PC-9 (cell line): ENCODE measurements at regions of chr3 and their contacts with region 1.

Region 1: DNA sequence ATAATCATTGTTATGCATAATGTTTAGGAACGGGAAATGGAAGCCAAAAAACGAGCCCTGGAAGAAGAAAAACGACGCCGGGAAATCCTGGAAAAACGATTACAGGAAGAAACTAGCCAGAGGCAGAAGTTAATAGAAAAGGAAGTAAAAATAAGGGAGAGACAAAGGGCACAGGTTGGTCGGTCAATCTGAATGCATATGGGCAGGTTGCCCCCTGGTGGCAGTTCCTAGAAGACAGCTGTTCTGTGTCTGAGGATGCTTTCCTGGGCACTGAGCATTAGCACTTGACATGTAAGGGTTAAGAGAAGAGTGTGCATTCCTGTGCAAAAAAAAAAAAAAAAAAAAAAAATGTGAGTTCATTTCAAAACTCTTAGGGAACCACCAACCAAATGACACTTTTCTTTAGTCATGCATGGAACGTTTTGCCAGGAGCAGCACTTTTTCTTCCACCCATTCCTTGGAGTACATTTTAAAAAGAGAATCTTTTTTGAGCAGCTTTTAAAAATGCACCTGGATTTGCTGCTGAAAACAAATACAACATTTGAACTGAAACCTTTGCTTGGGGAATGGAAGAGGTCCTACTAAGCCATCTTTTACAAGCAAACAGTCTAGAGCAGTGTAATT is 11.1 kb upstream of the ABHD10 start:
- DNase-seq: peak; percentile 71 to 85
- H3K4me3 ChIP-seq: no peak overlapping the region
- H3K27ac ChIP-seq: peak overlapping the region; percentile 54
- H3K4me1 ChIP-seq: peaks cover 25% of the 10 kb centered on the region
- H3K27me3 ChIP-seq: no peaks in the 10 kb centered on the region
- CTCF ChIP-seq: peak; percentile 99

Region 2: GRCh38 chr3:111577794-111578685 is 389.7 kb before region 1 on chr3:
- CTCF ChIA-PET with region 1: interaction called, 3 read pairs
- POLR2A ChIA-PET with region 1: interaction called, 4 read pairs
- intact Hi-C with region 1: loop called (anchors 1 kb)
- DNase-seq: peak; percentile 40 to 79
- H3K4me3 ChIP-seq: no peak overlapping the region
- H3K27ac ChIP-seq: no peak overlapping the region
- H3K4me1 ChIP-seq: peaks cover 12% of the 10 kb centered on the region
- H3K27me3 ChIP-seq: no peaks in the 10 kb centered on the region
- CTCF ChIP-seq: peak; percentile 80

Region 3: DNA sequence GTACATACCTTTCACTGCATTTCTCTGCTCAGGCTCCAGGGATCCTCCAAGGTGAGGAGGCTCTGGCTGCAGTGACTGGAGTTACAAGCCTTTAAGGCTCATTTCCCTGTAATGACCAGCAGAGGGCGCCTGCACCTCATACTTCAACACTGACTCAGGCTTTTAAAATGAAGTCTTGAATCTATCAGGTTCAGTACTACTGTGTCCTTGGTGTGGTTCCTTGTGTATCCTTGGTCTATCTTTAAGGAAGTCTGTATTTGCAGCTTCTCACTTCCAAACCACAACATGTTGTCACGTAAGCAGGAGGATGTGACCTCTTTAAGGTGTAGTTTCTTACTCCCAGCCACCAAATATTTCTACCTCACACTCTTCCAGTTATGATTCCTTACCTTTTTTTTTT is 250.2 kb before region 1 on chr3:
- CTCF ChIA-PET with region 1: interaction called, 37 read pairs
- POLR2A ChIA-PET with region 1: no interaction called
- intact Hi-C with region 1: loop called (anchors 1 kb)
- DNase-seq: peak; percentile 84 to 98
- H3K4me3 ChIP-seq: no peak overlapping the region
- H3K27ac ChIP-seq: peak overlapping the region; percentile 34
- H3K4me1 ChIP-seq: peaks cover 25% of the 10 kb centered on the region
- H3K27me3 ChIP-seq: no peaks in the 10 kb centered on the region
- CTCF ChIP-seq: peak; percentile 100

Region 4: DNA sequence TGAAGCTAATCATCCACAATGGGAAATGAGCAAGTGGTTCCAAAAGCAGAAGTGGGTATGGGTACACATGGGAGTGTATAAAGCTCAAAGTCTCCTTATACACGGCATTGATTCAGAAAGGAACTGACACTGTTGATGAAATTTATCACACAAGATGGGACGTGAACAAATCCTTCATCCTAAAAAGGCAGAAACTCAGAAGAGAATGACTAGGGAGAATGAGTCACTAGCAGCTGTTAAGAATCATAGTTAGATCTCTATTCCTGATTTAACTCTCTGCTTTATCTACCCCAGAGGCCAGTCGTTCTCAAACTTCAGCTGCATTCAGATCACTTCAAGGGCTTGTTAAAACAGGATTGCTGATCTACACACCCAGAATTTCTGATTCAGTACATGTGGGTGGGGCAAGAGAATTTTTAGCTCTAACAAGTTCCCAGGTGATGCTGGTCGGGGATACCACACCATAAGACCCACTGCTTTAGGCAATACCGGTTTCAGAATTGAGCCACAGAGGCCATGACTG is 206.4 kb before region 1 on chr3:
- CTCF ChIA-PET with region 1: no interaction called
- POLR2A ChIA-PET with region 1: interaction called, 10 read pairs
- intact Hi-C with region 1: no loop called
- DNase-seq: peak; percentile 47 to 73
- H3K4me3 ChIP-seq: no peak overlapping the region
- H3K27ac ChIP-seq: peak overlapping the region; percentile 32
- H3K4me1 ChIP-seq: peaks cover 10% of the 10 kb centered on the region
- H3K27me3 ChIP-seq: no peaks in the 10 kb centered on the region
- CTCF ChIP-seq: no peak

Region 5: DNA sequence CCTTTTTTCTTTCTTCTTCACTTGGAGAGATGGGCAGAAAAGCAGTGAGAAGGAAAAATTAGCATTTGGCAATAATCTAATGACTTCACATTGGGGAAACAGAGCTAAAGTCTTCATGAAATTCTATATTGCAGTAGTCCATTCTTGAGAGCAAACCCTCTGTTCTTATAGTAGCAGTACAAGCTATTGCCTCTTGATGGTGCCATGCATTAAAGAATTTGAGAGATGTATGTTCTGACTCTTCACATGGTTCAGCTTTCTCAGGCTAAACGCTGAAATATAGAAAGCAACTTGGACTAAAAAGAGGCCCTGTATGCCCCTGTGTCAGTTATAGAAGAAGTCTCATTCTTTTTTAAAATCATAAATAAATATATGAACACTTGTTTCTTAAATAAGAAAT is 72.7 kb before region 1 on chr3:
- CTCF ChIA-PET with region 1: interaction called, 17 read pairs
- POLR2A ChIA-PET with region 1: interaction called, 6 read pairs
- intact Hi-C with region 1: loop called (anchors 1 kb)
- DNase-seq: peak in 1 of 2 experiments; percentile 63
- H3K4me3 ChIP-seq: no peak overlapping the region
- H3K27ac ChIP-seq: peak overlapping the region; percentile 4; the same call in 1 of the 2 replicates
- H3K4me1 ChIP-seq: 0 out of 2 replicates have a peak, but pooled peaks cover 4% of the 10 kb centered on the region
- H3K27me3 ChIP-seq: no peaks in the 10 kb centered on the region
- CTCF ChIP-seq: peak; percentile 77

Region 6: DNA sequence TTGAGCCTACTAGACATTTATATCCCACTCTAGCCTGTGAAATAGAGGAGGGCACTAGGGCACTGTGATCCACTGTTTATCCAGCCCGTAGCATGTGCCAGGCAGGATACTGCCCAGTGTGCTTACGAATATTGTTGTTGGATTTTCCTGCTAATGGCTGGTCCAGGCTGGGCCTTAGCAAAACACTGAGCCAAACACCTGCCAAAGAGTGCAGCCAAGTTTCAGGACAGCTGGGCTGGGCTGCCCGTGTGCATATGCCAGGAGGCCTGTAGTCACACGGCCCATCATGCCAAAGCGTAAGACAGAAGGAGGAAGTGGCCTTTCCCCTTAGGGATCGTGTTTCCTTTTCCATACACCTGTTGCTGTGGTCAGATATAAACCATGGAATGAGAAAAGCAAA is 43.5 kb before region 1 on chr3:
- CTCF ChIA-PET with region 1: no interaction called
- POLR2A ChIA-PET with region 1: no interaction called
- intact Hi-C with region 1: loop called (anchors 2 kb)
- DNase-seq: peak in 1 of 2 experiments; percentile 60
- H3K4me3 ChIP-seq: 0 out of 2 replicates have a peak overlapping the region, but pooled peaks have one; percentile 1
- H3K27ac ChIP-seq: peak overlapping the region; percentile 96
- H3K4me1 ChIP-seq: peaks cover 52% of the 10 kb centered on the region
- H3K27me3 ChIP-seq: no peaks in the 10 kb centered on the region
- CTCF ChIP-seq: no peak